Adrenal gland (tissue), 19 donors: ENCODE measurements at regions of chr14 and their contacts with region 1.

Region 1: DNA sequence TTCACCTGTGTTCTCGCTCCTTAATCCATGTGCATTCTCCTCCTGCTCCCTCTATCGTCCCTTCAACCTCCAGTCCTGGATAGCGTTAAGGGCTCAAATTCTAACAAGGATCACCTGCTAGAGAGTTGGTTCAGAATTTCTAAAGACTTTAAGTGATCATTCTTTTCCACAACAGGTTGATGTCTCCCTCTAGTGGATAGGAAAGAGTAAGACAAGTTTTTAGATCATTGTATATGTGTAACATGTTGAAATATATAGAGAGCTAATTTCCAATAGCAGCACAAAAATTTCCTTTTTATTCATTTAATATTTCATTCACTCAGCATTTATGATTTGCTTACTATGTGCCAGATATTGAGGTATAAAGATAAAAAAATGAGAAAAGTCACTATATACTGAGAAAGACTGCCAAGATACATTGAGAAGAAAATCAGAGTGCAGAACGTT is 9.3 kb upstream of the ESR2 start:
- DNase-seq: no peak
- H3K4me3 ChIP-seq: no peak overlapping the region
- H3K27ac ChIP-seq: no peak overlapping the region
- H3K4me1 ChIP-seq: no peaks in the 10 kb centered on the region
- H3K27me3 ChIP-seq: no peaks in the 10 kb centered on the region
- CTCF ChIP-seq: peak; percentile 70 to 90 (median 86)
- POLR2A ChIP-seq: no peak

Region 2: GRCh38 chr14:64137657-64138290 is 165.7 kb before region 1 on chr14:
- intact Hi-C with region 1: loop called (anchors 5 to 10 kb)
- DNase-seq: peak; percentile 51 to 72 (median 65)
- H3K4me3 ChIP-seq: no peak overlapping the region
- H3K27ac ChIP-seq: no peak overlapping the region
- H3K4me1 ChIP-seq: no peaks in the 10 kb centered on the region
- H3K27me3 ChIP-seq: no peaks in the 10 kb centered on the region
- CTCF ChIP-seq: peak; percentile 29 to 67 (median 60)
- POLR2A ChIP-seq: no peak